Mammary epithelial cell (primary cell): ENCODE measurements at regions of chr2 and their contacts with region 1.

Region 1: GRCh38 chr2:23199115-23199918 is 185.7 kb upstream of the KLHL29 start:
- DNase-seq: peak; percentile 10
- H3K4me3 ChIP-seq: no peak overlapping the region
- H3K27ac ChIP-seq: no peak overlapping the region
- H3K4me1 ChIP-seq: no peaks in the 10 kb centered on the region
- H3K27me3 ChIP-seq: peaks cover 1% of the 10 kb centered on the region
- CTCF ChIP-seq: peak; percentile 70 to 71

Region 2: DNA sequence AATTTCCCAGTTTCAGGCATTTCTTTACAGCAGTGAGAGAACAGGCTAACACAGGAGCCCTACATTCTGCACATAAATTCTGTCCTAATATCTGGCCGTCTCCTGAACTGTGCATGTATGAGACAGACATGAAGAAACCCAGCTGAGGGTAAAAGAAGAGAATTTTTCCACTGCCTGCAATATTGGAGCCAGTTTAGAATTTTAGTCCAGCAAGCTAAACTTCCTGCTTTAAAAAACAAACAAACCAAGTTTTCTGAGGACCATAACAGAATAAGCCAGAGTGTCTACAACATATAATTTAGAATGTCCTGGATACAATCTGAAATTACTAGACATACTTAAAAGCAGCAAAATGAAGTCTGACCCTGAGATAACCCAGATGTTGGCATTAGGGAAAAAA is 29.4 kb before region 1 on chr2:
- CTCF ChIA-PET with region 1: no interaction called
- dilution Hi-C with region 1: no loop called
- in situ Hi-C with region 1: no loop called
- intact Hi-C with region 1: no loop called
- DNase-seq: no peak
- H3K4me3 ChIP-seq: no peak overlapping the region
- H3K27ac ChIP-seq: no peak overlapping the region
- H3K4me1 ChIP-seq: no peaks in the 10 kb centered on the region
- H3K27me3 ChIP-seq: no peaks in the 10 kb centered on the region
- CTCF ChIP-seq: no peak

Region 3: DNA sequence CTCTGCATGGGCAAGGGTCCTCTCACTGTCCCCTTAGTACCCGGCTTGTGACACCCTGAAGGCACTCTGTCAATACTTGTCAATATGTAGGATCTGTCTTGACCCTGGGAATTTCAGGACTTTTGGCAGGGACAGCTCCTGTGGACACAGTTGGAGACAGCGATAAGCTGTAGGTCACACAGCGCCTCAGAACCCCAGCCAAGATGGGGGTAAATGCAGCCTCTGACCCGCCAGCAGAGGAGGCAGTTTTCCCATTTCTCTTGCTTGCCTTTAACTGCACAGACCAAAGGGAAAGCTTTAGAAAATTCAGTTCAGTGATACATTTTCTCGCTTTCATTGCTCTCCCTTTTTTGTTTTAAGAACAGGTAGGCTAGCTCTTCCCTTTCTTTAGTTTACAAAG is 130.9 kb after region 1 on chr2:
- CTCF ChIA-PET with region 1: no interaction called
- dilution Hi-C with region 1: no loop called
- in situ Hi-C with region 1: loop called in 1 of 2 experiments (anchors 25 kb)
- intact Hi-C with region 1: no loop called
- DNase-seq: no peak
- H3K4me3 ChIP-seq: no peak overlapping the region
- H3K27ac ChIP-seq: no peak overlapping the region
- H3K4me1 ChIP-seq: no peaks in the 10 kb centered on the region
- H3K27me3 ChIP-seq: no peaks in the 10 kb centered on the region
- CTCF ChIP-seq: peak in 1 of 2 donors; percentile 9

Region 4: DNA sequence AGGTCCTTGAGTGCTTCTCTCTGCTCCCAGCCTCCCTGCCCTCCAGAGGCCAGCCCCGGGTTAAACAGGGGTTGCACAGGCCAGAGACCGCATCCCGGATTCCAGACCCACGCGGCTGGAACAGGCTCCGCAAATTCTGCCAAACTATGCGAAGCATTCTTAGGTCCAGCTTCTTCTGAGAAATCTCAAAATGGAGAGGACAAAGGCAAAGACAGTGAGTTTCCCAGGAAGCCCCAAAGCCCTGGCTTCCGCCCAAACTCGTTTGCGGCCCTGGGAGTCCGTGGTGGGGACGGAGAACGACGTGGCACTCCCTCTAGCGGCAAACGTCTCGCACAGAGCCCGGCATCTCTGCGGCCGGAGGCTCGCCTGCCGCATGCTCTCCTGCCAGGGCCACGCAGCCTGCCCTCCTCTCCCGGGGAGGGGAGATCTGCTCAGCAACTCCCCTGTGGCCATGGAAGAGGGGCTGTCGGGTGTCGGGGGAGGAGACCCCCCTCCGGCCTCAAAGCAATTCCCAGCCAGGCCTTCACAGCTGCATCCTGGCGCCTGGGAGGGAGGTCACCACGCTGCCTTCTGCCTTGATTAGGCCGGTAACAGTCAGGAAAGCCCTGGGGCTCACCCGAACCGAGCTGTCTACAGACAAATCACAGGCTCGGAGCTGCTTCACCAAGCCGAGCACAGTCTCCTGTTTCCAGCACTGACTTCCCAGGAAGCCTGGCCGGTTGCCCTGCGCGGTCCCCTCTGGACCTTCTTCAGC is 152.2 kb after region 1 on chr2:
- CTCF ChIA-PET with region 1: no interaction called
- dilution Hi-C with region 1: no loop called
- in situ Hi-C with region 1: loop called (anchors 10 to 25 kb)
- intact Hi-C with region 1: loop called (anchors 1 kb)
- DNase-seq: peak; percentile 50
- H3K4me3 ChIP-seq: no peak overlapping the region
- H3K27ac ChIP-seq: no peak overlapping the region
- H3K4me1 ChIP-seq: peaks cover 4% of the 10 kb centered on the region
- H3K27me3 ChIP-seq: peaks cover 6% of the 10 kb centered on the region
- CTCF ChIP-seq: peak; percentile 74 to 95

Region 5: DNA sequence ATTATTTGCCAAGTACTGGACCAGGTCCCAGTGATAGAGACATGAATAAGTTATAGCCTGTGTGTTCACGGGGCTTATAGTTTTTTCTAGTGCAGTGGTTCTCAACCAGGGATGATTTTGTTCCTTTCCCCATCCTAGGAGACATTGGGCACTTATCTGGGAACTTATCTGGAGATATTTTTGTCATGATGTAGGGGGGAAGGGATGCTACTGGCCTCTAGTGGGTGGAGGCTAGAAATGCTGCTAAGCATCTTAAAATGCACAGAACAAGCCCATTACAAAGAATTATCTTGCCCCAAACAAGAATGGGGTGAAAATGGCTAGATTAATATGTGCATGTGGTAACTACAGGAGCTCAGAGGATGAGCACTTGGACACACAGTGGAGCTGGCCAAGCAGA is 260.9 kb after region 1 on chr2:
- CTCF ChIA-PET with region 1: no interaction called
- dilution Hi-C with region 1: no loop called
- in situ Hi-C with region 1: no loop called
- intact Hi-C with region 1: loop called (anchors 1 kb)
- DNase-seq: no peak
- H3K4me3 ChIP-seq: no peak overlapping the region
- H3K27ac ChIP-seq: no peak overlapping the region
- H3K4me1 ChIP-seq: peaks cover 3% of the 10 kb centered on the region
- H3K27me3 ChIP-seq: no peaks in the 10 kb centered on the region
- CTCF ChIP-seq: peak; percentile 67

Region 6: GRCh38 chr2:23760736-23761135 is 561.4 kb after region 1 on chr2:
- CTCF ChIA-PET with region 1: no interaction called
- dilution Hi-C with region 1: no loop called
- in situ Hi-C with region 1: no loop called
- intact Hi-C with region 1: loop called (anchors 2 kb)
- DNase-seq: no peak
- H3K4me3 ChIP-seq: no peak overlapping the region
- H3K27ac ChIP-seq: no peak overlapping the region
- H3K4me1 ChIP-seq: peaks cover 25% of the 10 kb centered on the region
- H3K27me3 ChIP-seq: no peaks in the 10 kb centered on the region
- CTCF ChIP-seq: peak; percentile 25 to 37